CD4-positive, alpha-beta memory T cell (primary cell): ENCODE measurements at regions of chr10 and their contacts with region 1.

Region 1: GRCh38 chr10:132536971-132537712 is 445 bp upstream of the INPP5A start:
- DNase-seq: peak; percentile 100
- H3K4me3 ChIP-seq: peak overlapping the region in 1 of 2 donors; percentile 55
- H3K4me3 Mint-ChIP-seq: peak overlapping the region in 7 of 8 donors; percentile 58 to 83 (median 79)
- H3K27ac ChIP-seq: peak overlapping the region; percentile 65
- H3K27ac Mint-ChIP-seq: peak overlapping the region in 4 of 7 donors; percentile 64 to 83 (median 72)
- H3K4me1 ChIP-seq: peaks cover 38% of the 10 kb centered on the region
- H3K4me1 Mint-ChIP-seq: peaks cover 28 to 54% (median 36%) of the 10 kb centered on the region in 4 donors
- H3K27me3 ChIP-seq: no peaks in the 10 kb centered on the region
- H3K27me3 Mint-ChIP-seq: peaks cover 0 to 2% of the 10 kb centered on the region in 2 donors

Region 2: GRCh38 chr10:131981429-131982184 is 555.5 kb before region 1 on chr10 and contains the start of gene BNIP3:
- CTCF ChIA-PET with region 1: no interaction called
- POLR2A ChIA-PET with region 1: no interaction called
- intact Hi-C with region 1: loop called (anchors 5 kb)
- DNase-seq: peak; percentile 91 to 95 (median 94)
- H3K4me3 ChIP-seq: peak within 1 kb of the TSS; percentile 34 to 66
- H3K4me3 Mint-ChIP-seq: peak within 1 kb of the TSS; percentile 84 to 90 (median 86)
- H3K27ac ChIP-seq: peak within 1 kb of the TSS; percentile 61
- H3K27ac Mint-ChIP-seq: peak within 1 kb of the TSS; percentile 81 to 92 (median 87)
- H3K4me1 ChIP-seq: peaks cover 35% of the 10 kb centered on the region
- H3K4me1 Mint-ChIP-seq: peaks cover 24 to 56% (median 38%) of the 10 kb centered on the region in 4 donors
- H3K27me3 ChIP-seq: no peaks in the 10 kb centered on the region
- H3K27me3 Mint-ChIP-seq: no peaks in the 10 kb centered on the region
- total RNA-seq, gene BNIP3: 29.8 to 31.7 TPM

Region 3: GRCh38 chr10:132307823-132308587 is 229.1 kb before region 1 on chr10 and contains the start of gene STK32C:
- CTCF ChIA-PET with region 1: no interaction called
- POLR2A ChIA-PET with region 1: no interaction called
- intact Hi-C with region 1: loop called (anchors 1 kb)
- DNase-seq: peak; percentile 85 to 89 (median 88)
- H3K4me3 ChIP-seq: peak within 1 kb of the TSS; percentile 6 to 60
- H3K4me3 Mint-ChIP-seq: peak within 1 kb of the TSS; percentile 80 to 91 (median 86)
- H3K27ac ChIP-seq: no peak within 1 kb of the TSS
- H3K27ac Mint-ChIP-seq: peak within 1 kb of the TSS in 5 of 7 donors; percentile 62 to 79 (median 75)
- H3K4me1 ChIP-seq: peaks cover 15% of the 10 kb centered on the region
- H3K4me1 Mint-ChIP-seq: peaks cover 2 to 8% (median 6%) of the 10 kb centered on the region in 4 donors
- H3K27me3 ChIP-seq: no peaks in the 10 kb centered on the region
- H3K27me3 Mint-ChIP-seq: peaks cover 1 to 3% of the 10 kb centered on the region in 2 donors
- total RNA-seq, gene STK32C: 12.8 to 14.7 TPM

Region 4: DNA sequence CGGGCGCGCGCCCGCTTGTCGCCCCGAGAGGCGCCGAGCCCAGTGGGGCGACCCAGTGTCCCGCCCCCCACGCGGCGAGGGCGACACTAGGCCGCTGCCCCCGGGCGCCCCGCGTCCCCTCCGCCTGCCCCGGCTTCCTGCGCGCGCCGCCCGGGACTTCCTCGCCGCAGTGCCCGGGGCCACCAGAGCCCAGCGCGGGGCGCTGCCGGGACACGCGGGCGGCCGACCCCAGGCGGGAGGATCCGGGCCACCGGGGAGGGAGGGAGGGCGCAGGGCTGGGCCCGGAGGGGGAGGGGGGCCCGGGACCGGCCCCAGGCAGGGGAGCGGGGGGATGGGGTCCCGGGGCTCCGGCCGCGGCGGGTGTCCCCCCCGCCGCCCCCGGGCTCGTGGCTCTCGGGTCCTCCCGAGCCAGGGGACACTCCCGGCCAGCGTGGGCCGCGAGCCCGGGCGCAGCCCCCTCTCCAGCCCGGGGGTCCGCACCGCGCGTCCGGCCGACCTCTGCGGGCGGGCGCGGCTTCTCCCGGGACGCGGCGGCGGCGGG is 140.6 kb before region 1 on chr10:
- CTCF ChIA-PET with region 1: no interaction called
- POLR2A ChIA-PET with region 1: no interaction called
- intact Hi-C with region 1: loop called (anchors 1 kb)
- DNase-seq: peak; percentile 63 to 80 (median 78)
- H3K4me3 ChIP-seq: no peak overlapping the region
- H3K4me3 Mint-ChIP-seq: no peak overlapping the region
- H3K27ac ChIP-seq: peak overlapping the region; percentile 62
- H3K27ac Mint-ChIP-seq: no peak overlapping the region
- H3K4me1 ChIP-seq: peaks cover 26% of the 10 kb centered on the region
- H3K4me1 Mint-ChIP-seq: peaks cover 9 to 27% (median 20%) of the 10 kb centered on the region in 4 donors
- H3K27me3 ChIP-seq: no peaks in the 10 kb centered on the region
- H3K27me3 Mint-ChIP-seq: no peaks in the 10 kb centered on the region

Region 5: GRCh38 chr10:132452631-132453469 is 84.3 kb before region 1 on chr10:
- CTCF ChIA-PET with region 1: no interaction called
- POLR2A ChIA-PET with region 1: no interaction called
- intact Hi-C with region 1: loop called (anchors 2 kb)
- DNase-seq: peak; percentile 91 to 92 (median 91)
- H3K4me3 ChIP-seq: peak overlapping the region in 1 of 2 donors; percentile 32
- H3K4me3 Mint-ChIP-seq: peak overlapping the region in 6 of 8 donors; percentile 45 to 79 (median 56)
- H3K27ac ChIP-seq: peak overlapping the region; percentile 86
- H3K27ac Mint-ChIP-seq: peak overlapping the region; percentile 83 to 98 (median 95)
- H3K4me1 ChIP-seq: peaks cover 31% of the 10 kb centered on the region
- H3K4me1 Mint-ChIP-seq: peaks cover 6 to 37% (median 15%) of the 10 kb centered on the region in 4 donors
- H3K27me3 ChIP-seq: no peaks in the 10 kb centered on the region
- H3K27me3 Mint-ChIP-seq: no peaks in the 10 kb centered on the region

Region 6: GRCh38 chr10:132518572-132519381 is 18.4 kb before region 1 on chr10:
- CTCF ChIA-PET with region 1: no interaction called
- POLR2A ChIA-PET with region 1: no interaction called
- intact Hi-C with region 1: no loop called
- DNase-seq: no peak
- H3K4me3 ChIP-seq: no peak overlapping the region
- H3K4me3 Mint-ChIP-seq: peak overlapping the region in 2 of 8 donors; percentile 24 to 51
- H3K27ac ChIP-seq: no peak overlapping the region
- H3K27ac Mint-ChIP-seq: no peak overlapping the region
- H3K4me1 ChIP-seq: no peaks in the 10 kb centered on the region
- H3K4me1 Mint-ChIP-seq: no peaks in the 10 kb centered on the region
- H3K27me3 ChIP-seq: no peaks in the 10 kb centered on the region
- H3K27me3 Mint-ChIP-seq: peaks cover 1 to 6% of the 10 kb centered on the region in 2 donors

Region 7: DNA sequence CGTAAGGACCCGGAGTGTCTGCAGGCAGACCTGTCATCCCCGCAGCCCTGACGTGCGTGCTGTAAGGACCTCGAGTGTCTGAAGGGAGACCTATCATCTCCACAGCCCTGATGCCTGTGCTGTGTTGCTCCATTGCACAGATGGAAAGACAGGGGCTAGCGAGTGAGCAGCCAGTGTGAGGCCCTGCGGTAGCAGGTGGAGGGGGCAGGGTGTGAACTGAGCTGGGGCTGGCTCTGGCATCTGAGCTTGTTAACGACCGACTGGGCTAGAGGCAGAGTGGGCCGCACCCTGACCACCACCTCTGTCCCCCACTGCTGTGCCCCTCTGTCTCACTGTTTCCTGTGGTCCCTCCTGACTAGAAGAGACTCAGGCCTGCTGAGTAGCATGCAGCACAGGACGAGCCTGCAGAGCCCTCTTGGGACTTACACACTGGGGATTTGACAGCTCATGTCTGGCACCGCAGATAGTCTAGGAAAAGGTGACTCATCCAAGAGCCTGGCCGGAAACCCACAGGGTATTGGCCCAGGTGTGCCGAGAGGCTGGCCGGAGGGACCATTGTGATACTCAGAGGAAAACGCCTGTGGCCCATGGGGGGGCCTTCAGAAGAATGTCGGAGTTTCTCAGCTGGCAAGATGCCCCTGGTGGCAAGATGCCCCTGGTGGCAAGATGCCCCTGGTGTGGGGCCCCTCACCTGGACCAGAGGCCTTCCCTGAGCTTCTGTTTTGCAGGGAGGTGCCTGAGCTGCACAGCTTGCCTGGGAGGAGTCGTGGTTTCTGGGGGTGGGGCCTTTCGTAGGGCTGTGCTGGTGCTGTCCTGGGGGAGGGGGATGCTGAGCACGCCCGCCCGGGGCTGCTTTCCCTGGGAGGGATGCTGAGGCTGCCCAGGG is 34.8 kb after region 1 on chr10:
- CTCF ChIA-PET with region 1: interaction called, 4 read pairs
- POLR2A ChIA-PET with region 1: interaction called, 5 read pairs
- intact Hi-C with region 1: loop called (anchors 1 kb)
- DNase-seq: peak in 3 of 5 donors; percentile 31 to 86 (median 35)
- H3K4me3 ChIP-seq: no peak overlapping the region
- H3K4me3 Mint-ChIP-seq: peak overlapping the region in 5 of 8 donors; percentile 27 to 76 (median 67)
- H3K27ac ChIP-seq: no peak overlapping the region
- H3K27ac Mint-ChIP-seq: peak overlapping the region in 6 of 7 donors; percentile 21 to 79 (median 42)
- H3K4me1 ChIP-seq: peaks cover 31% of the 10 kb centered on the region
- H3K4me1 Mint-ChIP-seq: peaks cover 6 to 23% (median 18%) of the 10 kb centered on the region in 4 donors
- H3K27me3 ChIP-seq: no peaks in the 10 kb centered on the region
- H3K27me3 Mint-ChIP-seq: no peaks in the 10 kb centered on the region

Region 8: GRCh38 chr10:132585732-132586722 is 48.9 kb after region 1 on chr10:
- CTCF ChIA-PET with region 1: no interaction called
- POLR2A ChIA-PET with region 1: no interaction called
- intact Hi-C with region 1: no loop called
- DNase-seq: no peak
- H3K4me3 ChIP-seq: no peak overlapping the region
- H3K4me3 Mint-ChIP-seq: peak overlapping the region in 1 of 8 donors; percentile 3
- H3K27ac ChIP-seq: no peak overlapping the region
- H3K27ac Mint-ChIP-seq: peak overlapping the region in 2 of 7 donors; percentile 44 to 66
- H3K4me1 ChIP-seq: peaks cover 10% of the 10 kb centered on the region
- H3K4me1 Mint-ChIP-seq: peaks cover 25 to 60% (median 38%) of the 10 kb centered on the region in 4 donors
- H3K27me3 ChIP-seq: no peaks in the 10 kb centered on the region
- H3K27me3 Mint-ChIP-seq: no peaks in the 10 kb centered on the region

Region 9: DNA sequence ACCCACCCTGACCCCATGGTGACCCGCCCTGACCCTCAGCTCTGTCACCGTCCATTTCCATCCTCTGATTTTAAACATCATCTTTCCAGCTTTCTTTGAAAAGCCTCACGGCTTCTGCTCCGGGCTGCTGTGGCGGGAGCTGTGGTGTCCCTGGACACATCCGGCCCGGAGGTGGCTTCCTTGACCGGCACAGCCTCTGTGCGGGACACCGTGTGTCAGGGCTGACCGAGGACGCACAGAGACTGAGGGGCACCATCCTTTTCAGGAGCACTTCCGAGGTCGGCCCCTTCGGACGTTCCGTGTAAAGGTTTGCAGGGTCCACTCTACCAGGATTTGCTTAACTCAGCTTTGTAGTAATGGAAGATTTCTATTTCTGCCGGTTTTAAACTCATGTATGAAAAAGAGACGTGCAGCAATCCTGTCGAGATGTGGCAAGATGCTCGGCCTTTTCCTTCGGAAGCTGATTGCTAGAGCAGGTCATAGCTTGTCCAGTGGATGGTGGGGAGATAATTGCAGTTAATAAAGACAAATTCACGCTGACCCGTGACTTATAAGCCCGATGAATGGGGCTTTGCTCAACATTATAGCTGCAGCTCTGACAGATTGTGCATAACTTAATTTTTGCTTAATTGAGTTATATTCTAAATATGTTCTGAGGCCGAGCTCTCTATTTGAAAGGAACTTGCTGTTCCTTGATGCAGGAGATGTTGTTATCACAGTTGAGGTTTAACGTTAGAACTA is 459.6 kb after region 1 on chr10:
- CTCF ChIA-PET with region 1: no interaction called
- POLR2A ChIA-PET with region 1: no interaction called
- intact Hi-C with region 1: no loop called
- DNase-seq: no peak
- H3K4me3 ChIP-seq: no peak overlapping the region
- H3K4me3 Mint-ChIP-seq: no peak overlapping the region
- H3K27ac ChIP-seq: no peak overlapping the region
- H3K27ac Mint-ChIP-seq: no peak overlapping the region
- H3K4me1 ChIP-seq: no peaks in the 10 kb centered on the region
- H3K4me1 Mint-ChIP-seq: no peaks in the 10 kb centered on the region
- H3K27me3 ChIP-seq: no peaks in the 10 kb centered on the region
- H3K27me3 Mint-ChIP-seq: peaks cover 3 to 11% of the 10 kb centered on the region in 2 donors

Region 10: DNA sequence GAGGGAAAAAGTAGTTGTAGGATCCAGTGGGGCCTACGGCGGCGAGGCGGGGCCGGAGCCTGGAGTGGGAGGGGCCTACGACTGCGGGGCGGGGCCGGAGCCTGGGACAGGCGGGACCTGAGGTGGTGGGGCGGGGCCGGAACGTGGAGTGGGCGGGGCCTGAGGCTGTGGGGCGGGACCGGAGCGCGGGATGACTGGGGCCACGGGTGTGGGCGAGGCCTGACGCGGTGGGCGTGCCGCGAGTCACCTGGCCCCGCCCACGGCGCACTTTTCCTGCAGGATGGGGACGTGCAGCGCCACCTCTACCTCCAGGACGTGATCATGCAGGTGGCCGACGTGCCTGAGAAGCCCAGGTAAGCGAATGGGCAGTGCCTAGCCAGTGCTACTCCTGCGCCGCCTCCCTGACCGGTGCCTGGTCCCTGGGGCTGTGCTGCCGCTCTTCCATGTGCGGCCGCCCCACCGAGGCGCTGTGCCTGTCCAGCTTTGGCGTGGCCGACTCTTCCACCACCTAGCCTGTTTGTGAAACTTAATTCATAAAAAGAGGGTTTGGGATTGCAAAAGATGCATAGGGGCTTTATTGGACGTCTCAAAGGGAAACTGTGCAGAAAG is 772.1 kb after region 1 on chr10:
- CTCF ChIA-PET with region 1: no interaction called
- POLR2A ChIA-PET with region 1: no interaction called
- intact Hi-C with region 1: loop called (anchors 2 kb)
- DNase-seq: peak; percentile 92 to 97 (median 94)
- H3K4me3 ChIP-seq: peak overlapping the region in 1 of 2 donors; percentile 87
- H3K4me3 Mint-ChIP-seq: peak overlapping the region; percentile 67 to 83 (median 73)
- H3K27ac ChIP-seq: peak overlapping the region; percentile 97
- H3K27ac Mint-ChIP-seq: peak overlapping the region; percentile 80 to 91 (median 87)
- H3K4me1 ChIP-seq: peaks cover 23% of the 10 kb centered on the region
- H3K4me1 Mint-ChIP-seq: peaks cover 17 to 42% (median 28%) of the 10 kb centered on the region in 4 donors
- H3K27me3 ChIP-seq: no peaks in the 10 kb centered on the region
- H3K27me3 Mint-ChIP-seq: peaks cover 0 to 6% of the 10 kb centered on the region in 2 donors